Caco-2 (cell line): ENCODE measurements at regions of chr3 and their contacts with region 1.

Region 1: GRCh38 chr3:110940055-110940454 is 131.6 kb upstream of the NECTIN3 start:
- DNase-seq: peak in 1 of 2 experiments; percentile 27
- H3K4me3 ChIP-seq: no peak overlapping the region
- H3K4me3 Mint-ChIP-seq: no peak overlapping the region
- H3K27ac Mint-ChIP-seq: no peak overlapping the region
- H3K4me1 ChIP-seq: peaks cover 14% of the 10 kb centered on the region
- H3K4me1 Mint-ChIP-seq: peaks cover 13% of the 10 kb centered on the region
- H3K27me3 ChIP-seq: no peaks in the 10 kb centered on the region
- H3K27me3 Mint-ChIP-seq: no peaks in the 10 kb centered on the region
- CTCF ChIP-seq: no peak

Region 2: GRCh38 chr3:110925798-110926197 is 14.3 kb before region 1 on chr3:
- CTCF ChIA-PET with region 1: no interaction called
- POLR2A ChIA-PET with region 1: no interaction called
- intact Hi-C with region 1: loop called (anchors 2 kb)
- DNase-seq: no peak
- H3K4me3 ChIP-seq: no peak overlapping the region
- H3K4me3 Mint-ChIP-seq: no peak overlapping the region
- H3K27ac Mint-ChIP-seq: no peak overlapping the region
- H3K4me1 ChIP-seq: no peaks in the 10 kb centered on the region
- H3K4me1 Mint-ChIP-seq: no peaks in the 10 kb centered on the region
- H3K27me3 ChIP-seq: no peaks in the 10 kb centered on the region
- H3K27me3 Mint-ChIP-seq: no peaks in the 10 kb centered on the region
- CTCF ChIP-seq: no peak

Region 3: DNA sequence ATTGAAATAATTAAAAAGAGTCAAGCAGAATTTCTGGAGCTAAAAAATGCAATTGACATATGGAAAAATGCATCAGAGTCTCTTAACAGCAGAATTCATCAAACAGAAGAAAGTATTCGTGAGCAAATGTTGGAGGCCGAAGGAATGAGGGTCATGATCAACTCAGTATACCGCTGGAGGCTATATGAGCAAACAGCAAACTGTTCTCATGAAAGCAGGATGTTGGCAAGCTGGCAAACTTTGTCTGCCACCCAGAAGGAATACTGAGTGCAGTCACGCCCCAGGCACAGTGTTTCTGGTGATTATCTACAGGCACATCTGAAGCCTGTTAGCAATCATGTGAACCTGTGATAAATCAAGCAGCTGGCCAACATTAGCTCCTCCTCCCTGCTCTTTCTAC is 44.8 kb after region 1 on chr3:
- CTCF ChIA-PET with region 1: no interaction called
- POLR2A ChIA-PET with region 1: no interaction called
- intact Hi-C with region 1: no loop called
- DNase-seq: no peak
- H3K4me3 ChIP-seq: no peak overlapping the region
- H3K4me3 Mint-ChIP-seq: no peak overlapping the region
- H3K27ac Mint-ChIP-seq: no peak overlapping the region
- H3K4me1 ChIP-seq: no peaks in the 10 kb centered on the region
- H3K4me1 Mint-ChIP-seq: no peaks in the 10 kb centered on the region
- H3K27me3 ChIP-seq: no peaks in the 10 kb centered on the region
- H3K27me3 Mint-ChIP-seq: no peaks in the 10 kb centered on the region
- CTCF ChIP-seq: no peak